B cell (primary cell): ENCODE measurements at regions of chrX and their contacts with region 1.

Region 1: DNA sequence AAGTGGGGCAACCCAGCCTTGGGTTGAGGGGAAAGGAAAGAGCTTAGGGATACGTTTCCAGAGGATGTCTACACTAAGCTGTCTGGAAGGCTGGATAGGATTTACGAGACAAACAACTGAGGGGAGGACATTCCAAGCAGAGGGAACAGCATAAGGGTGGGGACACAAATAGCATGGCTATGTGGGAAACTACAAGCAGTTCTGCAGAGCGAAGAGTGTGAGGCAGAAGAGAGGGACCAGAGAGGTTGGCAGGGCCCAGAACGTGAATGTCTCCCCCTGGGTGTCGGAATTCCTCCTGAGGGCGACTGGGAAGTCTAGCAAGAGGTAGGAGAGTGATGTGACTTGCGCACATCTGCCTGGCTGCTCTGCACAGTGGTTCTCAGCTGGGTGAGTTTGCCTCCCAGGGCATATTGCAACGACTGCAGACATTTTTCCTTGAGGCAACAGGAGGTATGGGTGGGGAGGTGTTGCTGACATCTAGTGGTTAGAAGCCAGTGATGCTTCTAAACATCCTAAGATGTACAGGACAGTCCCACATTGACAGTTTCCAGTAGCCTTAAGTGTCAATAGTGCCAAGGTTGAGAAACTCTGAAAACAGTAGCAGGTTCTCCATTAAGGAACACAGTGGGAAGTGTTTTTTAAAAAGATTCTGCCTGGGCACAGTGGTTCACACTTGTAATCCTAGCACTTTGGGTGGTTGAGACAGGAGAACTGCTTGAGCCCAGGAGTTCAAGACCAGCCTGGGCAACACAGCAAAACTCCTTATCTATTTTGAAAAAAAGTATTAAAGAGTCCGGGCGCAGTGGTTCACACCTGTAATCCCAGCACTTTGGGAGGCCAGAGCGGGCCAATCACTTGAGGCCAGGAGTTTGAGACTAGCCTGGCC is 9.2 kb downstream of the NDUFA1 start:
- DNase-seq: peak; percentile 58
- ATAC-seq: peak; percentile 63
- H3K4me3 ChIP-seq: no peak overlapping the region
- H3K4me3 Mint-ChIP-seq: no peak overlapping the region
- H3K27ac ChIP-seq: no peak overlapping the region
- H3K27ac Mint-ChIP-seq: no peak overlapping the region
- H3K4me1 ChIP-seq: peaks cover 0 to 5% of the 10 kb centered on the region in 2 donors
- H3K4me1 Mint-ChIP-seq: peaks cover 12% of the 10 kb centered on the region
- H3K27me3 ChIP-seq: no peaks in the 10 kb centered on the region
- H3K27me3 Mint-ChIP-seq: no peaks in the 10 kb centered on the region
- CTCF ChIP-seq: peak; percentile 54

Region 2: GRCh38 chrX:119488749-119489148 is 392.0 kb before region 1 on chrX:
- CTCF ChIA-PET with region 1: interaction called, 3 read pairs
- POLR2A ChIA-PET with region 1: no interaction called
- intact Hi-C with region 1: loop called (anchors 2 kb)
- DNase-seq: peak; percentile 56
- ATAC-seq: no peak
- H3K4me3 ChIP-seq: no peak overlapping the region
- H3K4me3 Mint-ChIP-seq: no peak overlapping the region
- H3K27ac ChIP-seq: no peak overlapping the region
- H3K27ac Mint-ChIP-seq: no peak overlapping the region
- H3K4me1 ChIP-seq: no peaks in the 10 kb centered on the region
- H3K4me1 Mint-ChIP-seq: peaks cover 2% of the 10 kb centered on the region
- H3K27me3 ChIP-seq: no peaks in the 10 kb centered on the region
- H3K27me3 Mint-ChIP-seq: no peaks in the 10 kb centered on the region
- CTCF ChIP-seq: peak; percentile 67